ENCODE measurements at regions of chr5 and their contacts with region 1.

Region 1: GRCh38 chr5:14326035-14326903 is 183.1 kb downstream of the TRIO start:
- DNase-seq: peak; percentile 21
- H3K4me3 ChIP-seq: no peak overlapping the region
- H3K27ac ChIP-seq: no peak overlapping the region
- H3K4me1 ChIP-seq: no peaks in the 10 kb centered on the region
- H3K27me3 ChIP-seq: no peaks in the 10 kb centered on the region
- CTCF ChIP-seq: peak in 1 of 2 donors; percentile 36
- POLR2A ChIP-seq: no peak

Region 2: DNA sequence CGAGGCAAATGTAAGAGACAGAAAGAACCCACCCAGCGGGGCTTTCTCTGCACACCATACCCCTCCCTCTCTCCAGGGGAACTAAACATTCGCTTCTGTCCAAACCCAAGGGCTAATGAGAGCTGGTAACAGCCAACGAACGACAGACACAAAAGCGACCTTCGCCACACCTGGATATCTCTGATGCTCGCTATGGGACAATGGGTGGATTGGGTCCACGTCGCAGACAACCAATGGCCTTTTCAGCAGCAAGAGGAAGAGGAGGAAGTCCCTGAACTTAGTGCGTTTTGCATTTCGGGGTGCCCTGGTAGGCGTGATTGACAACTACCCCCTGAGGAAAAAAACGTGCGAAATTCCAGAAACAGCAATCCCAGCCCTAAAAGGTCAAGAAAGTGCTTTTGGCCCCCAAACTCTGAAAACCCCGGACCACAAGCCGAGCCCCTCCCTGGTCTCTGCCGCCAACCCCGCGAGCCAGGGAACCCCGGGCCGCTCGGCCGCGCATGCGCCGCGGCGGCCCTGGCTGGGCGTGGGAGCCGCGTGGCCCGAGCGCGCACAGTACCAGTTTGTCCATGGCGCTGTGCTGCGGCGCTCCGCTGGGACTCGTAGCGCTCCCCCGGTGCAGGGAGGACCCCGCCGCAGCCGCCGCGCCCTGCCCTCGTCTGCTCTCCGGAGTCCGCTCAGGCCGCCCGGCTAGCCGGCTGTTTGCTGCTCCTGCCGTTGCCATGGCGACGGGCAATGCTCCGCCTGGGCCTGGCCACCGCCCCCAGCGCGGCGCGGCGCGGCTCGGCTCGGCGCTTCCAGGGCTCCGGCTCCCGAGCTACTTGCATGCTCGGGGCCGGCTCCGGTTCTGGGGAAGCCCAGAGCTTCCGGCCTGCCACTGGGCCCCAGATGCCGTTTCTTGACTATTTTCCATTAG is 314.9 kb before region 1 on chr5:
- CTCF ChIA-PET with region 1: no interaction called
- POLR2A ChIA-PET with region 1: no interaction called
- dilution Hi-C with region 1: no loop called
- intact Hi-C with region 1: loop called (anchors 5 kb)
- DNase-seq: peak; percentile 89
- H3K4me3 ChIP-seq: peak overlapping the region; percentile 40 to 71 (median 58)
- H3K27ac ChIP-seq: peak overlapping the region; percentile 23
- H3K4me1 ChIP-seq: peaks cover 5% of the 10 kb centered on the region
- H3K27me3 ChIP-seq: no peaks in the 10 kb centered on the region
- CTCF ChIP-seq: no peak
- POLR2A ChIP-seq: no peak